GM10248 (cell line): ENCODE measurements at regions of chr7 and their contacts with region 1.

Region 1: DNA sequence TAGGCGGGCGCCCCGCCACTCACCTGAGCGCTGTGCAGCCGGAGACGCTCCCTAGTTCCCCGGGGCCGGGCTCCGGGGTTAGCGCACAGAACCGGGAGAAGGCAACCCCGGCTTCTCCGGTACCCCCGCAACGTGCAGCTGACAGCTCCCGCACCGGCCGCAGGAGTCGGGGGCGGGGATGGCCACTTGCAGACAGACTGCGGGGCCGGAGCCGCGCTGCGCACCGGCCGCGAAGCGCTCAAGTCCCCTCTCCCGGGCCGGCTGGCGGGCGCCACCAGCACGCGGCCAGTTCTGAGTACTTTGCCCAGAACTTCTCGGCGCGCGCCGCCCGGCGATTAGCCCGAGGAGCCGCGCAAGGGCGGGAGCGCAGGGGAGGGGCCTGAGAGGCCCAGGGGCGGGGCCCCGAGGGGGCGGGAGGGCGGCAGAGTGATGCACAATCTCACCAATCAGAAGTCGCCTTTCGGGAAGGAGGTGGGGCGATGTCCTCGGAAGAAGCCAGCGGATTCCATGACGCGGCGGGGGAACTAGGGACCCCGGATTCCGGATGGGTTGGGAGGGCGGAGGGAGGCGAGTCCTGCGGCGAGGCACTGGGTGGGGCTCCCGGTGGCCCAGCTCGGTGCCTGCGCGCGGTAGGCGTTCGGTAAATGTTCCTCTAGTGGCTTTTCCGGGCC is at the start of gene OSBPL3:
- DNase-seq: peak; percentile 94
- CTCF ChIP-seq: peak; percentile 46

Region 2: DNA sequence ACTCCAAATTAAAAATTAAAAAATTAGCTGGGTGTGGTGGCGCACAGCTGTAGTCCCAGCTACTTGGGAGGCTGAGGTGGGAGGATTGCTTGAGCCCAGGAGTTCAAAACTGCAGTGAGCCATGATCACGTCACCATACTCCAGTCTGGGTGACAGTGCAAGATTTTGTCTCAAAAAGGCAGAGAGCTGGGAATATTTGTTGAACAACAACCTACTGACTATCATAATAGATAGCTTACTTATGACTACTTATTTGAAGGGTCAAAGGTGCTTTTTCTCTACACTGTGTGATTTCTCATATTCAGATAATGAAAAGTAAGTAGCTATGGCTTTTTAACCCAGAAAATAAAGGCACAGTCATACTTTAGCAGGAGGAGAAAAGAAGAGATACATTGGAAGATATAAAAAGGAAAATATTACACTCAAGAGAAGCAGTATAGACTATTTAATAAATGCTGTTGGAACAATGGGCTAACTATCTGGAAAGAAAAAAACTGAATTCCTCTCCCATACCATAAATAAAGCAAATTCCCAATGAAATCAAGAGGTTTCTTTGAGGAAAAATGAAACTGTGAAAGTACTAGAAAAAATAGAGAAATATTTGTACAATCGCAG is 229.4 kb before region 1 on chr7:
- CTCF ChIA-PET with region 1: no interaction called
- POLR2A ChIA-PET with region 1: no interaction called
- DNase-seq: no peak
- CTCF ChIP-seq: no peak

Region 3: GRCh38 chr7:24825931-24826661 is 153.9 kb before region 1 on chr7:
- CTCF ChIA-PET with region 1: interaction called, 26 read pairs
- POLR2A ChIA-PET with region 1: interaction called, 4 read pairs
- DNase-seq: no peak
- CTCF ChIP-seq: no peak

Region 4: GRCh38 chr7:24896031-24896501 is 83.9 kb before region 1 on chr7:
- CTCF ChIA-PET with region 1: interaction called, 33 read pairs
- POLR2A ChIA-PET with region 1: no interaction called
- DNase-seq: peak; percentile 75
- CTCF ChIP-seq: no peak

Region 5: GRCh38 chr7:24917510-24918239 is 62.3 kb before region 1 on chr7:
- CTCF ChIA-PET with region 1: interaction called, 14 read pairs
- POLR2A ChIA-PET with region 1: no interaction called
- DNase-seq: no peak
- CTCF ChIP-seq: no peak

Region 6: DNA sequence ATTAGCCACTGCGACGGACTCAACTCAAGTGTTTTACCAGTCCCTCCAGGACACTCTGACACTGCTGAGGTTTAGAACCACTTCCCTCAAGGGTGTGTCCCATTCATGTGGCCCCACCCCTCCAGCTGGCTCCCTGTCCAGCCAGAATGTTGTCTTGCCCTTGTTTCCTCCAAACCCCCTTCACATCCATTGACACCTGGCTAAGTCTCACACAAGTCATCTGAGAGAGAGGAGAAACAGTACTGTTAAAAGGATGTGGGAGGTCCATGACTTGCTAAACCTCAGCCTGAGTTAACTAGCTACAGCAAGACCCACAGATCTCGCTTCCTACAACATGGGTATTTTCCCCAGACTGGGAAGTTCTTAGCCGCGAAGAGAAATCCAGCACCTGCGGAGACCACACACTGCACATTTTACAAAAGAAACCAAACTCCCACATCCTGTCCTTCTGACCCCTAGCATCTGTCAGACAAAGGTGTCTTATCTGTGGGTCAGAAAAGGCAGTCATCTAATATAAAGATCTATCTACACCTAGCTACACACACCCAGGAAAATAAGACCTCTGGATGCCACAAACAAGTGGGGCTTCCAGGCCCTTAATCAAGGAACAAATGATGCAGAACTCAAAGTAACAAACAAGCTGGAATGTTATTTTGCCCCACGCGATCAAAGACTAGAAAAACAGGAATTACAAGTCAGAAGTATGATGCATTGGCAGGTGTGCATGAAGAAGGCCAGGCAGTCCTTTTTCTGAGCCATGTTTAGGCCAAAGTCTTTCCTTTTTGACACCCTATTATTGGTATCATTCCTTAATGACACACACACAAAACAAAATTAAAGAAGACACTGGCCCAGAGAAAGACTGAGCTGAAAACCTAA is 13.9 kb before region 1 on chr7:
- CTCF ChIA-PET with region 1: interaction called, 69 read pairs
- POLR2A ChIA-PET with region 1: interaction called, 6 read pairs
- DNase-seq: peak; percentile 67
- CTCF ChIP-seq: no peak

Region 7: GRCh38 chr7:25420771-25421170 is 440.8 kb after region 1 on chr7:
- CTCF ChIA-PET with region 1: no interaction called
- POLR2A ChIA-PET with region 1: no interaction called
- DNase-seq: no peak
- CTCF ChIP-seq: no peak